Activated B cell treated with CpG ODN at 0.5 μM for 24 hours (primary cell): ENCODE measurements at regions of chr12 and their contacts with region 1.

Region 1: GRCh38 chr12:14960548-14961465 is 594 bp downstream of the ARHGDIB start:
- DNase-seq: peak; percentile 41
- ATAC-seq: peak; percentile 59
- H3K4me3 Mint-ChIP-seq: peak overlapping the region; percentile 96
- H3K27ac Mint-ChIP-seq: peak overlapping the region; percentile 98
- H3K4me1 Mint-ChIP-seq: peaks cover 78% of the 10 kb centered on the region
- H3K27me3 Mint-ChIP-seq: no peaks in the 10 kb centered on the region
- CTCF ChIP-seq: no peak

Region 2: DNA sequence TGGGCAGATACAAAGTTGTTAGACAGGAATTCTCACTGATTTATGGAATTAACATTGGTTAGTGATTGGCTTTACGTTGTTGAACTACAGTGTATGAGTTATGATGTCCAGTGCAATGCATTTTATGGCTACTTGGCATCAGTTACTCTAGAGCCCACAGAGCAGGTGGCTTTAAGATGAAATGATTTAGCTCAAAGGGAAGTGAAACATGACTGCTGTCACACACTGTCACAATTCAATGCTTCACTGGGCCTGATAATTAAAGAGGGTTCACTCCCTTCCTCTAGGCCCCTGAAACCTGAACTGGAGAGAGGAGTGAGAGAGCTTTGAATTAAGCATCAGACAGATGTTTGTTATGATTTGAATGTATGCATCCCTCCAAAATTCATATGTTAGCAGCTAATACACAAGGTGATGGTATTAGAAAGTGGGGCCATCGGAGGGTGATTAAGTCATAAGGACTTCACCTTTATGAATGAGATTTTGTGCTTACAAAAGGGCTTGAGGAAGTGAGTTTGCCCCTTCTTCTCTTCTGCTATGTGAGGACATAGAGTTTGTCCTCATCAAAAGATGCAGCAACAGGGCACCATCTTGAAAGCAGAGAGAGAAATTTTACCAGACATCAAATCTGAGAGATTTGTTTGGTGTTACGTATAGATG is 803.6 kb before region 1 on chr12:
- CTCF ChIA-PET with region 1: no interaction called
- POLR2A ChIA-PET with region 1: no interaction called
- intact Hi-C with region 1: loop called (anchors 2 kb)
- DNase-seq: no peak
- ATAC-seq: peak; percentile 91
- H3K4me3 Mint-ChIP-seq: peak overlapping the region; percentile 62
- H3K27ac Mint-ChIP-seq: peak overlapping the region; percentile 97
- H3K4me1 Mint-ChIP-seq: peaks cover 71% of the 10 kb centered on the region
- H3K27me3 Mint-ChIP-seq: no peaks in the 10 kb centered on the region
- CTCF ChIP-seq: no peak

Region 3: DNA sequence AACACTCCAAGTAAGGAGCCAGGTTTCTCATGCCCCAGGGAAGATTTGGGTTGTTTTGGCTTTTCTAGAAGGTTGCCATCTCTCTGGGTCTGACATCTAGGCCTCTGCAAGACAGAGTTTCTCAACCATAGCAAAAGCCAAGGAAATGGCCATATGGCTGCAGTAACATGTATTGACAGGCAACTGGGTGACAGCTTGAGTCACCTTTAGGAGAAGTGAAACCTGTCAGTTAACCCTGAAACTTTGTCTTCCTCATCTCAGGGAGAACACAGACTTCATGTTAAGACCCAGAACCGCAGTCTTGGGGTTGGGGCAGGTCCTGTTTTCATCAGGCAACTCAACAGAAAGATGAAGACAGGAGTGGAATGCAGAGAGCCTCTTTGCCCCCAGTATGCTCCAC is 347.1 kb before region 1 on chr12:
- CTCF ChIA-PET with region 1: no interaction called
- POLR2A ChIA-PET with region 1: no interaction called
- intact Hi-C with region 1: loop called (anchors 2 kb)
- DNase-seq: peak; percentile 34
- ATAC-seq: peak; percentile 86
- H3K4me3 Mint-ChIP-seq: peak overlapping the region; percentile 60
- H3K27ac Mint-ChIP-seq: peak overlapping the region; percentile 93
- H3K4me1 Mint-ChIP-seq: peaks cover 38% of the 10 kb centered on the region
- H3K27me3 Mint-ChIP-seq: no peaks in the 10 kb centered on the region
- CTCF ChIP-seq: no peak

Region 4: DNA sequence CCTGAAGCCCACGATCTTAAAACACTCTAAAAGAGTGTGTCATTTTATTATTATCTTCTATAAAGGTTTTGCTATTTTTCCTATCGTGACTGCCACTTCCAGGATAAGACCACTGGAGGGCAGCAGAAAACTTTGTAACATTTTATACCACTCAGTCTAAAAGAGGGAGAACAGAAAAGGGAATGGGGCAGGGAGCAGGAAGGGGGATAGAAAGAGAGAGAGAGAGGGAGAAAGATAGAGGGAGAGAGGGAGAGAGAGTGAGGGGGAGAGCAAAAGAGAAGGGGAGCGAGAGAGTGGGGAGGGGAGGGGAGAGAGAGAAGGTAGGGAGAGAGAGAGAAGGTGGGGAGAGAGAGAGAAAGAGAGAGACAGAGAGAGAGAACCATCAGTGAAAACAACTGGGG is 115.5 kb before region 1 on chr12:
- CTCF ChIA-PET with region 1: interaction called, 3 read pairs
- POLR2A ChIA-PET with region 1: no interaction called
- intact Hi-C with region 1: loop called (anchors 1 kb)
- DNase-seq: no peak
- ATAC-seq: peak; percentile 81
- H3K4me3 Mint-ChIP-seq: no peak overlapping the region
- H3K27ac Mint-ChIP-seq: peak overlapping the region; percentile 51
- H3K4me1 Mint-ChIP-seq: peaks cover 14% of the 10 kb centered on the region
- H3K27me3 Mint-ChIP-seq: no peaks in the 10 kb centered on the region
- CTCF ChIP-seq: peak; percentile 87

Region 5: GRCh38 chr12:14937689-14938088 is 23.1 kb before region 1 on chr12:
- CTCF ChIA-PET with region 1: interaction called, 6 read pairs
- POLR2A ChIA-PET with region 1: interaction called, 49 read pairs
- intact Hi-C with region 1: loop called (anchors 1 kb)
- DNase-seq: no peak
- ATAC-seq: peak; percentile 41
- H3K4me3 Mint-ChIP-seq: no peak overlapping the region
- H3K27ac Mint-ChIP-seq: peak overlapping the region; percentile 91
- H3K4me1 Mint-ChIP-seq: peaks cover 37% of the 10 kb centered on the region
- H3K27me3 Mint-ChIP-seq: no peaks in the 10 kb centered on the region
- CTCF ChIP-seq: no peak

Region 6: GRCh38 chr12:14982562-14982961 is 21.8 kb after region 1 on chr12:
- CTCF ChIA-PET with region 1: interaction called, 3 read pairs
- POLR2A ChIA-PET with region 1: interaction called, 4 read pairs
- intact Hi-C with region 1: loop called (anchors 2 kb)
- DNase-seq: no peak
- ATAC-seq: no peak
- H3K4me3 Mint-ChIP-seq: no peak overlapping the region
- H3K27ac Mint-ChIP-seq: peak overlapping the region; percentile 76
- H3K4me1 Mint-ChIP-seq: peaks cover 47% of the 10 kb centered on the region
- H3K27me3 Mint-ChIP-seq: no peaks in the 10 kb centered on the region
- CTCF ChIP-seq: no peak

Region 7: GRCh38 chr12:15172060-15172822 is 211.4 kb after region 1 on chr12:
- CTCF ChIA-PET with region 1: no interaction called
- POLR2A ChIA-PET with region 1: no interaction called
- intact Hi-C with region 1: no loop called
- DNase-seq: no peak
- ATAC-seq: no peak
- H3K4me3 Mint-ChIP-seq: no peak overlapping the region
- H3K27ac Mint-ChIP-seq: no peak overlapping the region
- H3K4me1 Mint-ChIP-seq: no peaks in the 10 kb centered on the region
- H3K27me3 Mint-ChIP-seq: peaks cover 11% of the 10 kb centered on the region
- CTCF ChIP-seq: no peak

Region 8: DNA sequence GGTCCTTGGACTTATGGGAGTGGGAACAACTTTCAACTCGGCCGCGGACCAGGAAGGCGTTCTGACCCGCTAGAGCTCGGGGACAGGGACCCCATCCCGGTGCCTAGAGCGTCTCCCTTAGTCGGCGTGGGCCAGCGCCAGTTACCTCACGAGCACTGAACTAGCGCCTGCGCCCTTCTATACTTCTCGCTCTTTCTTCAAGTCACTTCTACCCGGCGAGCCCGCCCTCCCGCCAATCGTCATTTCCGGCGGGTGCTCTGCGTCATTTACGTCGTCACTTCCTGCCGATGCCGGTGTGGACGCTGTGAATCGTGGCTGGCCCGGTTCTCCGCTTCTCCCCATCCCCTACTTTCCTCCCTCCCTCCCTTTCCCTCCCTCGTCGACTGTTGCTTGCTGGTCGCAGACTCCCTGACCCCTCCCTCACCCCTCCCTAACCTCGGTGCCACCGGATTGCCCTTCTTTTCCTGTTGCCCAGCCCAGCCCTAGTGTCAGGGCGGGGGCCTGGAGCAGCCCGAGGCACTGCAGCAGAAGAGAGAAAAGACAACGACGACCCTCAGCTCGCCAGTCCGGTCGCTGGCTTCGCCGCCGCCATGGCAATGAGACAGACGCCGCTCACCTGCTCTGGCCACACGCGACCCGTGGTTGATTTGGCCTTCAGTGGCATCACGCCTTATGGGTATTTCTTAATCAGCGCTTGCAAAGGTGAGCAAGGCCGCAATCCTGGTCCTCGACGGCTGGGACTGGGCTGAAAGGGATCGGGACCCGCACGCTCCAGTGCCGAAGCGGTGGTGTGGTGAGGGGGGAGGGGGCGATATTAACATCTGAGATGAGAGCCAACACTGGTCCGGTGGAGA is 921.5 kb after region 1 on chr12 and contains the start of gene STRAP:
- CTCF ChIA-PET with region 1: no interaction called
- POLR2A ChIA-PET with region 1: no interaction called
- intact Hi-C with region 1: loop called (anchors 2 kb)
- DNase-seq: peak; percentile 95
- ATAC-seq: peak; percentile 94
- H3K4me3 Mint-ChIP-seq: peak within 1 kb of the TSS; percentile 99
- H3K27ac Mint-ChIP-seq: peak within 1 kb of the TSS; percentile 99
- H3K4me1 Mint-ChIP-seq: peaks cover 53% of the 10 kb centered on the region
- H3K27me3 Mint-ChIP-seq: no peaks in the 10 kb centered on the region
- CTCF ChIP-seq: no peak
- total RNA-seq, gene STRAP: 78.1 and 82.3 TPM in 2 replicates